A673 (cell line): ENCODE measurements at regions of chrX and their contacts with region 1.

Region 1: DNA sequence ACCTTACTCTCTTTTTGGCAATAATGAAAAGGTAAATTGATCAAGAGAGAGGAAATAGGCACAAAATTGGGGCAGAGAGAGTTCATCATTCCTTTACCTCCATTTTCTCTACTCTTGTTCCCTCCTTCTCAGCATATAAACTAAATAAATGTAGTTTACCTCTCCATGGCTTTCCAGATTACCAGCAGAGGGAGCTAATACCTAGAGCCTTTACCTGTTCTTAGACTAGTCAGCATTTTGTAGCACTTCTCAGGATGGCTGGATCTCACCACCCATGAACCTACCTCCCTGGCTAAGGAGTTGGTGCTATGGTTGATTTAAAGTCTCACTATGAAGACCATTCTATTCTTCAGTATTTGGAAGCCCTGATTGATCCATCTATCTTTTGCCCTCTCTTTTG is 15.7 kb downstream of the OFD1 start:
- DNase-seq: peak; percentile 39
- H3K4me3 ChIP-seq: no peak overlapping the region
- H3K27ac ChIP-seq: no peak overlapping the region
- H3K4me1 ChIP-seq: no peaks in the 10 kb centered on the region
- H3K27me3 ChIP-seq: no peaks in the 10 kb centered on the region
- CTCF ChIP-seq: peak; percentile 66

Region 2: GRCh38 chrX:13506574-13506973 is 243.6 kb before region 1 on chrX:
- CTCF ChIA-PET with region 1: interaction called, 3 read pairs
- POLR2A ChIA-PET with region 1: no interaction called
- intact Hi-C with region 1: loop called (anchors 5 kb)
- DNase-seq: peak; percentile 75
- H3K4me3 ChIP-seq: no peak overlapping the region
- H3K27ac ChIP-seq: no peak overlapping the region
- H3K4me1 ChIP-seq: no peaks in the 10 kb centered on the region
- H3K27me3 ChIP-seq: no peaks in the 10 kb centered on the region
- CTCF ChIP-seq: peak; percentile 87

Region 3: GRCh38 chrX:13658602-13659001 is 91.6 kb before region 1 on chrX:
- CTCF ChIA-PET with region 1: no interaction called
- POLR2A ChIA-PET with region 1: no interaction called
- intact Hi-C with region 1: loop called (anchors 1 kb)
- DNase-seq: peak; percentile 72
- H3K4me3 ChIP-seq: no peak overlapping the region
- H3K27ac ChIP-seq: no peak overlapping the region
- H3K4me1 ChIP-seq: no peaks in the 10 kb centered on the region
- H3K27me3 ChIP-seq: no peaks in the 10 kb centered on the region
- CTCF ChIP-seq: peak; percentile 75

Region 4: DNA sequence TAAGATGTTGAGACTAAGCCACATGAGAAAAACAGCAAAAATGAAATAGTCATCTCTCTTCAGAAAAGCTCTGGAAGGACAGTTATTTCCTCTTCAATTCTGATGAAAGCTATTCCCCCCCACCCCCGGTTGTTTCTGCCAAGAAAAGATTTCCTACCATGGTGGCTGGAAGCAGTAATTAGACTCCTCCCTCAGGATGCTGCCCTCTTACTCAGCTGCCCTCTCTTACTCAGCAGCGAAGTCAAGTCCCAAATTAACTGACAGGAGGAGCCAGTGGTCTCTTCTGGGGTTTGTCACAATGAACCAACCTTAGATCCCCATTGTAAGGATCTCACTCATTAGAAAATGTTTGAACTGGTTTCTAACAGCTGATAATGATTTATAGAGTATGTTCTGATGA is 28.7 kb after region 1 on chrX:
- CTCF ChIA-PET with region 1: no interaction called
- POLR2A ChIA-PET with region 1: no interaction called
- intact Hi-C with region 1: no loop called
- DNase-seq: peak; percentile 18
- H3K4me3 ChIP-seq: no peak overlapping the region
- H3K27ac ChIP-seq: no peak overlapping the region
- H3K4me1 ChIP-seq: no peaks in the 10 kb centered on the region
- H3K27me3 ChIP-seq: no peaks in the 10 kb centered on the region
- CTCF ChIP-seq: no peak

Region 5: GRCh38 chrX:13827691-13828090 is 77.5 kb after region 1 on chrX:
- CTCF ChIA-PET with region 1: no interaction called
- POLR2A ChIA-PET with region 1: no interaction called
- intact Hi-C with region 1: no loop called
- DNase-seq: no peak
- H3K4me3 ChIP-seq: no peak overlapping the region
- H3K27ac ChIP-seq: no peak overlapping the region
- H3K4me1 ChIP-seq: no peaks in the 10 kb centered on the region
- H3K27me3 ChIP-seq: no peaks in the 10 kb centered on the region
- CTCF ChIP-seq: no peak